ENCODE measurements at regions of chr11 and their contacts with region 1.

Region 1: GRCh38 chr11:113494021-113494420 is 18.8 kb upstream of the DRD2 start:
- DNase-seq: no peak

Region 2: GRCh38 chr11:111565114-111565720 is 1928.8 kb before region 1 on chr11:
- intact Hi-C with region 1: no loop called
- DNase-seq: no peak

Region 3: GRCh38 chr11:113519989-113520613 is 26.1 kb after region 1 on chr11:
- intact Hi-C with region 1: loop called in 1 of 2 experiments (anchors 1 kb)
- DNase-seq: no peak

Measured in posterior vena cava (tissue), 2 donors.